Right ventricle myocardium inferior (tissue), 1 donor: ENCODE measurements at regions of chr5 and their contacts with region 1.

Region 1: GRCh38 chr5:135398853-135399523 is at the start of gene MACROH2A1:
- DNase-seq: peak; percentile 97
- ATAC-seq: peak; percentile 96
- total RNA-seq, gene MACROH2A1: 104 TPM

Region 2: GRCh38 chr5:135356522-135357318 is 42.3 kb before region 1 on chr5:
- intact Hi-C with region 1: loop called (anchors 2 kb)
- DNase-seq: peak; percentile 88
- ATAC-seq: peak; percentile 94

Region 3: GRCh38 chr5:135651150-135651549 is 252.2 kb after region 1 on chr5:
- intact Hi-C with region 1: no loop called
- DNase-seq: no peak
- ATAC-seq: no peak